ENCODE measurements at regions of chr6 and their contacts with region 1.

Region 1: DNA sequence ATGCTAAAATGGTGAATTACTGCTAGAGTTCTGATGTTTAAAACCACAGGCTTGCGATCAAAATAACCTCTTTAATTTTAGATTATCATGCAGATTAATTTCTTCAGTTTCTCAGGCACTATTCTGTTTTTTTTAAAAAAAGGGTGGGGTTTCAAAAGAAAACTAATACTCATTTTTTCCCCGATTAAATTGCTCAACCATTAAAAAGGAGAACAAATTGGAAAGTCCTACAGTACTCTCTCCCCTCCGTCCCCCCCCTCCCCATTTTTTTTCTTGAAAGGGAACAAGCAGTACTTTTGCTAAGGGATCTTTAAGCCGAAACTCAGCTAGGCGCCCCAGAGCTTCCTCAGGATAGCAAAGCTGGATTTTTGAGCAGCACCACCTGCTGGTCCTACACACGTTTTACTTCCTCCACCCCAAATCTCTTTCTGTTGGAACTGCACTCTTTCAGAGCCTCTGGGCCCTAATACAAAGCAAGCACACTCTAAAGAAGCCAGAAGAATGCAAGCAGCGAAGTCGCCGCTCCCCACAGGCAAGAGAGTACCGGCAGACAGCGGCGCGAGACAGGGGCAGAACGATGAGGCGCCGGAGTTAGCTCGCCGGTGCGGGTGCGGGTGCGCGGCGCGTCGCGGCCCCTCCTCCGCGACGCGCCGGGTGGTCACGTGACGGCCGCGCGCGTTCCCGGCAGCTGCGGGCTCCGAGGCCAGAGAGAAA is at the start of gene RNF146:
- DNase-seq: peak; percentile 75 to 78
- ATAC-seq: peak; percentile 84 to 87
- H3K4me3 ChIP-seq: peak within 1 kb of the TSS; percentile 74 to 90 (median 84)
- H3K27ac ChIP-seq: peak within 1 kb of the TSS; percentile 95 to 99 (median 96)
- H3K4me1 ChIP-seq: peaks cover 32 to 33% of the 10 kb centered on the region in 2 donors
- H3K27me3 ChIP-seq: no peaks in the 10 kb centered on the region
- CTCF ChIP-seq: peak; percentile 75 to 83 (median 80)
- POLR2A ChIP-seq: no peak
- total RNA-seq, gene RNF146: 36.3 to 82.3 (median 56.8) TPM

Region 2: GRCh38 chr6:126718600-126719327 is 547.6 kb before region 1 on chr6:
- in situ Hi-C with region 1: no loop called
- intact Hi-C with region 1: loop called (anchors 5 kb)
- DNase-seq: no peak
- ATAC-seq: no peak
- H3K4me3 ChIP-seq: no peak overlapping the region
- H3K27ac ChIP-seq: peak overlapping the region in 3 of 4 donors; percentile 4 to 79 (median 79)
- H3K4me1 ChIP-seq: peaks cover 19 to 21% of the 10 kb centered on the region in 2 donors
- H3K27me3 ChIP-seq: no peaks in the 10 kb centered on the region
- CTCF ChIP-seq: no peak
- POLR2A ChIP-seq: no peak

Region 3: GRCh38 chr6:126963077-126963809 is 303.1 kb before region 1 on chr6:
- in situ Hi-C with region 1: no loop called
- intact Hi-C with region 1: loop called (anchors 10 kb)
- DNase-seq: peak; percentile 25 to 54
- ATAC-seq: peak; percentile 89 to 92
- H3K4me3 ChIP-seq: peak overlapping the region in 3 of 4 donors; percentile 18 to 25 (median 21)
- H3K27ac ChIP-seq: peak overlapping the region; percentile 60 to 74 (median 72)
- H3K4me1 ChIP-seq: no peaks in the 10 kb centered on the region
- H3K27me3 ChIP-seq: no peaks in the 10 kb centered on the region
- CTCF ChIP-seq: no peak
- POLR2A ChIP-seq: no peak

Region 4: GRCh38 chr6:127146932-127147331 is 119.4 kb before region 1 on chr6:
- in situ Hi-C with region 1: no loop called
- intact Hi-C with region 1: loop called (anchors 1 kb)
- DNase-seq: peak in 1 of 2 donors; percentile 12
- ATAC-seq: peak in 1 of 2 donors; percentile 10
- H3K4me3 ChIP-seq: no peak overlapping the region
- H3K27ac ChIP-seq: peak overlapping the region; percentile 58 to 81 (median 68)
- H3K4me1 ChIP-seq: peaks cover 42 to 50% of the 10 kb centered on the region in 2 donors
- H3K27me3 ChIP-seq: no peaks in the 10 kb centered on the region
- CTCF ChIP-seq: no peak
- POLR2A ChIP-seq: no peak

Region 5: GRCh38 chr6:127192911-127193541 is 73.3 kb before region 1 on chr6:
- in situ Hi-C with region 1: loop called in 3 of 4 experiments (anchors 5 to 10 kb)
- intact Hi-C with region 1: loop called (anchors 2 kb)
- DNase-seq: no peak
- ATAC-seq: peak; percentile 68
- H3K4me3 ChIP-seq: no peak overlapping the region
- H3K27ac ChIP-seq: peak overlapping the region; percentile 72 to 78 (median 74)
- H3K4me1 ChIP-seq: peaks cover 42 to 44% of the 10 kb centered on the region in 2 donors
- H3K27me3 ChIP-seq: no peaks in the 10 kb centered on the region
- CTCF ChIP-seq: no peak
- POLR2A ChIP-seq: no peak

Region 6: GRCh38 chr6:127205036-127205435 is 61.3 kb before region 1 on chr6:
- in situ Hi-C with region 1: no loop called
- intact Hi-C with region 1: no loop called
- DNase-seq: no peak
- ATAC-seq: no peak
- H3K4me3 ChIP-seq: no peak overlapping the region
- H3K27ac ChIP-seq: no peak overlapping the region
- H3K4me1 ChIP-seq: no peaks in the 10 kb centered on the region
- H3K27me3 ChIP-seq: no peaks in the 10 kb centered on the region
- CTCF ChIP-seq: no peak
- POLR2A ChIP-seq: no peak

Region 7: GRCh38 chr6:127342946-127343808 is 76.8 kb after region 1 on chr6 and contains the start of gene ECHDC1:
- in situ Hi-C with region 1: no loop called
- intact Hi-C with region 1: loop called (anchors 1 kb)
- DNase-seq: peak; percentile 26 to 44
- ATAC-seq: peak; percentile 83 to 84
- H3K4me3 ChIP-seq: peak within 1 kb of the TSS; percentile 72 to 91 (median 78)
- H3K27ac ChIP-seq: peak within 1 kb of the TSS; percentile 80 to 88 (median 82)
- H3K4me1 ChIP-seq: peaks cover 13 to 32% of the 10 kb centered on the region in 2 donors
- H3K27me3 ChIP-seq: no peaks in the 10 kb centered on the region
- CTCF ChIP-seq: peak in 2 of 5 experiments; percentile 16 to 18
- POLR2A ChIP-seq: peak; percentile 19 to 33
- total RNA-seq, gene ECHDC1: 31.4 to 45.3 (median 33.6) TPM